Heart right ventricle (tissue), 16 donors: ENCODE measurements at regions of chr10 and their contacts with region 1.

Region 1: DNA sequence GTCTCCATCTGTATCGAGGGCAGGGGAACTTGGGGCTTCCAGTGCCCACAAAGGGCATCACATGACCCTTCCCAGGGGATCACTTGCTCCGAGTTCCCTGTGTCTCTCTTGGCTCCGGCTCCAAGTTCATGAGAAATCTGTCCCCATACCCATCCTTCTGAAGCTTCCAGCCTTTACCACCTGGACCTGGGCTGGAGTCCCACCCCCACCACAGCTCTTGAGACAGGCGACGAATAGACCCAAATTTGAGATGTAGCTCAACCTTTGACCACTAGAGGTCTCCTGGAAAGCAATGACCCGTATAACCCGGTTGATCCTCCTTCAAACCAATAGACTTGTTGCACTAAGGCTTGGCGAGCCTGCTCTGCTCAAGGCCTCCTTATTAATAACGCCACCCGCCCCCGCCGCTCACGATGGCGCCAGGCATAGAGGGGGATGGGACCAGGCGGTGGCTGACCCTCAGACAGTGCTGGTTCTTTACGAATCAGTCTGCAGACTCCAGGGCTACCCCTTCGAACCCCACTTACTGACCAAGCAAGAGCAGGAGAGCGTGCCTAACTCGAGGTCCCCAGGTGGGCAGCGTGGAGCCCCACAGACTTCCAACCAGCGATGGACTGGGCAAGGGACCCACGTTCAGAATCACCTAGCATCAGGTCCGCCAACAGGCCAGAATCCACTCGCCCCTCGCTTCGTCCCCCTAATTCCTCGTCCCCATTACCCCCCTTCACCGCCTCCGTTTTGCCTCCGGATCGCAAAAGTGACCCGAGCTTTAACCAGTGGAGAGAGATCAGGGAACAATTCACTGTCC is 4.4 kb upstream of the ARID5B start:
- DNase-seq: peak; percentile 56 to 69
- ATAC-seq: peak; percentile 81 to 88 (median 84)
- H3K4me3 ChIP-seq: peak overlapping the region in 9 of 10 donors; percentile 30 to 56 (median 46)
- H3K27ac ChIP-seq: peak overlapping the region in 9 of 10 donors; percentile 25 to 84 (median 68)
- H3K4me1 ChIP-seq: peaks cover 3 to 36% (median 15%) of the 10 kb centered on the region in 9 donors
- H3K27me3 ChIP-seq: no peaks in the 10 kb centered on the region
- CTCF ChIP-seq: peak; percentile 37 to 78 (median 71)

Region 2: GRCh38 chr10:61294131-61294530 is 602.9 kb before region 1 on chr10:
- intact Hi-C with region 1: no loop called
- DNase-seq: no peak
- ATAC-seq: no peak
- H3K4me3 ChIP-seq: no peak overlapping the region
- H3K27ac ChIP-seq: no peak overlapping the region
- H3K4me1 ChIP-seq: no peaks in the 10 kb centered on the region
- H3K27me3 ChIP-seq: no peaks in the 10 kb centered on the region
- CTCF ChIP-seq: no peak

Region 3: GRCh38 chr10:61974601-61975390 is 77.7 kb after region 1 on chr10:
- intact Hi-C with region 1: loop called in 4 of 10 experiments (anchors 2 to 10 kb)
- DNase-seq: peak; percentile 33 to 72
- ATAC-seq: peak in 6 of 8 donors; percentile 64 to 80 (median 72)
- H3K4me3 ChIP-seq: peak overlapping the region in 1 of 10 donors; percentile 1
- H3K27ac ChIP-seq: peak overlapping the region in 9 of 10 donors; percentile 43 to 73 (median 59)
- H3K4me1 ChIP-seq: peaks cover 9 to 71% (median 52%) of the 10 kb centered on the region in 9 donors
- H3K27me3 ChIP-seq: no peaks in the 10 kb centered on the region
- CTCF ChIP-seq: no peak

Region 4: DNA sequence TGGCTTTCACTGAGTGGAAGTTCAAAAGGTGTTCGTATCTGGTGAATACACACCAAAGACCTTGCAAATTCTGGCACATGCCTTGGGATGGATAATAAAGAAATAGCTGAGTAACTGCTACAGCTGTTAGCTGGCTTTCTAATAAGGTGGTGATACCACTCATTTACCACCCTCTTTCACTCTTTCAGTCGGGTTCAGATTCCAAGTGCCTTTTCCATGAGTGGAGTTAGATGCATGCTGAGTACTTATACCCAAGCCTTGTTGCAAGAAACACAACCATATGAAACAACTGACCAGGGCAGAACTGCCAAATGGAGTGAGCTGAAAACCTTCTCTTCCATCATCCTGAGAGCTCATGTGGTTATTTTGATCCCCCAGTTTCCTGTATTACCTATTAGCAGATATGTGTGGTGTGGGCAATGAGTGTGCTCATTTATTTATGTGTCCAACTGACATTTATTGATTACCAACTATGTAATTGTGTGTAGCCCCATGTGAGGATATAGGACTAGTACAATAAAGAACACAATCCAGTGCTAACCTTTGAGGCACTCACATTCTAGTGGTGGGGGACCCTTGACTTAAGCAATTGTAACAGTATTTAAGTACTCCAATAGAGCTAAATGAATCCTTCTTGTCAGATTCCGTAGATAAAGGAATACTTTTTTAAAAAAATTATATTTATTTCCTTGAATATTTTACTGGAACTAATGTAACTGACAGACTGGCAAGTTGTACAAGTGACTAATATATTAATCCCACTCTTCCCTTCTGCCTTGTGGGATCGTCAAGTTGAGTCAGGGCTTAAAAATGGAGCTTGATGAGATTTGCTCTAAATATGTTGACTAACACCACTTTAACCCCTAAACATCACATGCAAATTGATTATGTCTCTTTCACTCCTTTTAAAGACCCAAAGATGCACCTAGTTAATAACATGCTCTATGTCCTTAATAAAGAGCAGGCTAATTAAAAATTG is 129.1 kb after region 1 on chr10:
- intact Hi-C with region 1: loop called in 2 of 10 experiments (anchors 10 kb)
- DNase-seq: no peak
- ATAC-seq: no peak
- H3K4me3 ChIP-seq: no peak overlapping the region
- H3K27ac ChIP-seq: no peak overlapping the region
- H3K4me1 ChIP-seq: peaks cover 0 to 36% (median 3%) of the 10 kb centered on the region in 9 donors
- H3K27me3 ChIP-seq: no peaks in the 10 kb centered on the region
- CTCF ChIP-seq: no peak

Region 5: DNA sequence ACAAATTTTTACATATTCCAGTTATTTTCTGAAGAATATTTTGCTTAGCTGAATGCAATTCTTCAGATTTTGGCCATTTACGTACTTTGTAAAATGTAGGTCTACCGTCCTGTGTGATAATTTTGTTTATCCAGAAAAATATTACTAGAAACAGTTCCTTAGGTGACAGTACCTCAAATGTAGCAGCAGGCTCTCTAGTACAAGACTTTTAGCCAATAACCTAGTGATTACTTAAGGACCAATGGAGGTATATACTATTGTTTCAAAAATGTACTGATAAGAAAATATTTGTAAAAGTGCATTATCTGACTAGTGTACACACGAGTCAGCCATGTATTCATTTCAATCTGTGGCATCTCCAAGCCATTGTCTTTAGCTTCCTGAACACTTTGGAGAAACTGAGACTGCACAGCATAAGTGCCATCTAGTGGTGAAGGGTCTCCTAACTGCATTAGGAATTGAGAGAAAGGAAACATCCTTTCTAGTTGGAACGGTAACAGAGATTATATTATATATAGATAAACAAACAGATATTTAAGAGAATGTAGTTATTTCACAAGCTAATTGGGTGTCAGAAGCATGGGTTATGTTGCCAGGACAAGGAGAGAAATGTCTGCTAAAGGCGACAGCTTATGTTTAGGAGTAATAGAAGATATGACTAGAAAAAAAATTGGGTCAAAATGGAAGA is 347.9 kb after region 1 on chr10:
- intact Hi-C with region 1: loop called (anchors 1 to 10 kb)
- DNase-seq: peak in 1 of 2 donors; percentile 70
- ATAC-seq: peak; percentile 41 to 90 (median 84)
- H3K4me3 ChIP-seq: peak overlapping the region in 2 of 10 donors; percentile 12 to 41
- H3K27ac ChIP-seq: peak overlapping the region in 1 of 10 donors; percentile 78
- H3K4me1 ChIP-seq: peaks cover 0 to 32% (median 3%) of the 10 kb centered on the region in 9 donors
- H3K27me3 ChIP-seq: no peaks in the 10 kb centered on the region
- CTCF ChIP-seq: peak; percentile 70 to 95 (median 91)